GM13977 (cell line): ENCODE measurements at regions of chr19 and their contacts with region 1.

Region 1: GRCh38 chr19:13880059-13881043 is 3.4 kb downstream of the NANOS3 start:
- DNase-seq: peak; percentile 97
- CTCF ChIP-seq: peak; percentile 94

Region 2: GRCh38 chr19:14048443-14049153 is 168.2 kb after region 1 on chr19:
- in situ Hi-C with region 1: loop called (anchors 5 kb)
- DNase-seq: peak; percentile 75
- CTCF ChIP-seq: peak; percentile 87